ENCODE measurements at regions of chr3 and their contacts with region 1.

Region 1: DNA sequence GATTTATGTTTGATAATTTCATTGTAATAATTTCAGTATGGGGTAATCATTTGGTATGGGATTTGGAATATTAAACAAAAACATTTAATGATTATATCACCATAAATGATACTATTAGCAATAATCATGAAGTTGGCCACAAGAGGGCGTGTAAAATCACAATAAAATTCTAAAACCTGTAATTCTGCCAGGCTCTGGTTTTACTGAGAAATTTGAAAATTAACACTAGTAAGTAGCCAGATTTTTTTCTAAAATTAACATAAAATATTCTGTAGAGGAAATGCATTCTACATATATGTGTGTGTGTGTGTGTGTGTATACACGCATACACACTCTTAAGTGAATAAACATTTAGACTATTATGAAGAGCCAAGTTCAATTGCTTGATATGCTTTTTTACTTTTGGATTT is 40.5 kb downstream of the FEZF2 start:
- DNase-seq: no peak
- H3K4me3 Mint-ChIP-seq: no peak overlapping the region
- H3K27ac Mint-ChIP-seq: no peak overlapping the region
- H3K4me1 Mint-ChIP-seq: no peaks in the 10 kb centered on the region
- H3K27me3 Mint-ChIP-seq: peaks cover 3% of the 10 kb centered on the region

Region 2: DNA sequence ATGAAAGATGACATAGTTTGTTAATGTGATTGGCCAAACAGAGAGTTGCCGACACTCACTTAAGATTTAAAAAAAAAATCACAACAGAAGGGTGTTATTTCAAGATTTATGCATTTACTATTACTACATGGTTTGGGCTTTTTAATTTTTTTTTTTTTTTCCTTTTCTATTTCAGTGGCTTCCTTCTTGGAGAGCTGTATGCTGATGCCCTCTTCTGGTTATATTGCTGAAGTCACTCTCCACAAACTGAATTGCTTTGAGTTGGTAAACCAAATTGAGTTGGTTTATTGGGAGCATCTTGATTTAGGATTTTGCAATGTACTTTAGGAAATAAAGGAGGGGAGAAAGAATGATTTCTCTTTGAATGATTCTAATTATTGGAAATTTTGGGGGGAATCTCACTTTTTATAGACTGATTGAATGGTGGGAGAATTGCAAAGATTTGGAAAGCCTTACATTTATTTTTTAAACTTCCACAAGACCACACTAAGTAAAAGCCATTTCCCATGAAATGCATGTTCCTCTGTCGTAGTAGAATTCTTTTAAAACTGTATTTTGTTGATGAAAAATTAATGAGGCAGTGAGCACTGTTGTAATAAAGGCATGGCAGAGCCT is 227.1 kb after region 1 on chr3:
- intact Hi-C with region 1: loop called (anchors 2 kb)
- DNase-seq: no peak
- H3K4me3 Mint-ChIP-seq: no peak overlapping the region
- H3K27ac Mint-ChIP-seq: no peak overlapping the region
- H3K4me1 Mint-ChIP-seq: no peaks in the 10 kb centered on the region
- H3K27me3 Mint-ChIP-seq: no peaks in the 10 kb centered on the region